Dendritic cell treated with granulocyte-macrophage colony-stimulating factor and Interleukin-4, amounts not matched to agents 40 ng/mL and 50 ng/mL, for 4 days (primary cell): ENCODE measurements at regions of chr14 and their contacts with region 1.

Region 1: DNA sequence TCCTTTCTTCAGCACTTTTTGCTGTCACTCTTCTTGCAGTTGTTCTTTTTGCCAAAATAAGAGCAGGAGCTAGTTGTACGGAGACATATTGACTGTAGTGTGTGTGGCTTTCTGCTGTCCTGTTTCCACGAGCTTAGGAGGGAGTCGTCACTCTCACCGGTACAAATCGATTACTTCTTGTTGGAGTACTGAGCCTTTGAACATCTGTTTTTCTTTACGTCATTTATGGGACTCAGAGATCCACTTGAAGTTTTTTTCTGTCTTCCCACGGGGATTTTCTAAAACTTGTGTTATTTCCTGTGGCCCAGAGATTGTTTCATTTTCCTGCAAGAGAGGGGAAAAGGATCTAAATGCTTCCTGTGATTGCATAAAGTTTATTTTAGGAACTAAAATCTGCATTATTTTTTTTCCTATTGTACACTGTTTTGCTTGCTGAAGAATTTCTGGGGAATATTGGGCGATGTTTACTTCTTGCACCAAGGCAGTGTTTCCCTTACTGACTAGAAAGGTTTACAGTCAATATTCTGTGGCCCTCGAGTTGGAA is 199.8 kb upstream of the ARHGAP5 start:
- H3K4me3 Mint-ChIP-seq: no peak overlapping the region
- H3K27ac Mint-ChIP-seq: no peak overlapping the region
- H3K4me1 Mint-ChIP-seq: peaks cover 12% of the 10 kb centered on the region
- H3K27me3 Mint-ChIP-seq: peaks cover 1% of the 10 kb centered on the region

Region 2: GRCh38 chr14:31578266-31578665 is 299.1 kb before region 1 on chr14:
- intact Hi-C with region 1: loop called (anchors 10 kb)
- H3K4me3 Mint-ChIP-seq: no peak overlapping the region
- H3K27ac Mint-ChIP-seq: no peak overlapping the region
- H3K4me1 Mint-ChIP-seq: no peaks in the 10 kb centered on the region
- H3K27me3 Mint-ChIP-seq: no peaks in the 10 kb centered on the region

Region 3: DNA sequence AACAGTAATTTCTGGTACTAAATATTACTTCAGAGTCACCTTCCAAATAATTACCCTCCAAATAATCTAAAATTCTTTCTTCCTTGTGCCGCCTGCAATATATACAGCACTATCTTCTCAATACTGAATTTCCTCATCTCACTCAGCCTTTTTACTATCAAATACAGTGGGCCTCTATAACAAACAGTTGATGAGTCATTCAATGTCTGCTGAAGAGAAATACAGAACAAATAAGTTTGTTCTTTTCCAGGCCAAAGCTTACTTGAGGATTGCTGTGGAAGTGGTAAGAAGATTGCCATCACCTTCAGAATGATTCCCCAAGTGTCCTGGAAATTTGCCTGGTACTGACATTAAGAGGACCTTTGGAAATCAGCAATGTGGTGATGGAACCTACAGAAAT is 18.5 kb before region 1 on chr14:
- intact Hi-C with region 1: no loop called
- H3K4me3 Mint-ChIP-seq: no peak overlapping the region
- H3K27ac Mint-ChIP-seq: no peak overlapping the region
- H3K4me1 Mint-ChIP-seq: no peaks in the 10 kb centered on the region
- H3K27me3 Mint-ChIP-seq: no peaks in the 10 kb centered on the region